Right ventricle myocardium superior (tissue), 1 donor: ENCODE measurements at regions of chr3 and their contacts with region 1.

Region 1: DNA sequence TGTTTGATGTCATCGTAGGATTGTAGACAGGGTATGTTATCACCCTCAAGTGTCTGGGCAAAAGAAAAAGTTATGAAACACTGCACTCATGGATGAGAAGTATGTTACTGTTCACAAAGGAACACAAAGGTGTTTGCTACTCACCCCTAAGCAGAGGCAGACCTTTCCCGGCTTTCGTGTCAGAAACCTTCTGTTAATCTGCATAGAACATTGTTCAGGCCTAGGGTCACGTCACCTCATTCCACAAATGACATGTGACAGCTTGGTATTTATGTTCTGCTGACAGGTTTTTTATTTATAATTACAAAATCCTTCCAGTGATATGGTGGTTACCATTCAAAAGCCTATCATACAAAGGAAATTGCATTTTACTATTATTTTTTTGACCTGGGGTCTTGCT is 16.5 kb downstream of the THUMPD3 start:
- DNase-seq: no peak
- ATAC-seq: no peak

Region 2: GRCh38 chr3:9452417-9452816 is 73.1 kb after region 1 on chr3:
- intact Hi-C with region 1: loop called (anchors 5 kb)
- DNase-seq: no peak
- ATAC-seq: no peak